A673 (cell line): ENCODE measurements at regions of chr7 and their contacts with region 1.

Region 1: DNA sequence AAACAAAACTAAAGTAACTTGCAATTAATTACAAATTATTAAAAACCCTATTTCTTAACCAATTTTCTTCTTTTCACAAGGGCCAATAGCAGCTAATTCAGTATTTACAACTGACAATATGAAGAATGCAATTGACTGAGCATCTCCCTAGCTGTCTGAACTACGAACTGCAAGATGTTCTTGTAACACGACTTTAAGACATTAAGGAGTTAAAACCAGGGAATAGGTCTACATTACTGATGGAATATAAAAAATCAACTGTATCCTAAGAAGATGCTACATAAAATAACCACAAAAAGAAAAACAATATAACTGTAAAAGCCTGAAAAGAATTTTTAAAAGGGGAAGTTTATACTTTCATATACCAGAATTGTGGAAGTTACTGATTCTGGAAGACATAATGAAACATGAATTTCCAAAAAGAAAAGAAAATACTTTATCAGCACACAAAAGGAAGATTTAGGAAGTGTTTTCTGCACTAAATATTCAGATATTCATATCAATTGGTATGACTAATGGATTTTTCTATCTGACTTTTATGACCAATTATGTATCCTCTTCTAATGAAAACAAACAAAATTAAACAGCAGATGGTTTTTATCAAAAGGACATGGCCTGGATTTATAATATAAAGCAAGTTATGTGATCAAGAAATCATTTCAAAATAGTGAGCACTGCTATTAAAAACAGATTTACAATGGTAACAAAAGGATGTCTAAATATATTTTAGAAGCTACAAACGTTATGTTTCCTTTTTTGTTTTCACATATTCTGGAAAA is 1.6 kb downstream of the GPR22 start:
- DNase-seq: no peak
- H3K4me3 ChIP-seq: no peak overlapping the region
- H3K27ac ChIP-seq: no peak overlapping the region
- H3K4me1 ChIP-seq: no peaks in the 10 kb centered on the region
- H3K27me3 ChIP-seq: no peaks in the 10 kb centered on the region
- CTCF ChIP-seq: no peak

Region 2: DNA sequence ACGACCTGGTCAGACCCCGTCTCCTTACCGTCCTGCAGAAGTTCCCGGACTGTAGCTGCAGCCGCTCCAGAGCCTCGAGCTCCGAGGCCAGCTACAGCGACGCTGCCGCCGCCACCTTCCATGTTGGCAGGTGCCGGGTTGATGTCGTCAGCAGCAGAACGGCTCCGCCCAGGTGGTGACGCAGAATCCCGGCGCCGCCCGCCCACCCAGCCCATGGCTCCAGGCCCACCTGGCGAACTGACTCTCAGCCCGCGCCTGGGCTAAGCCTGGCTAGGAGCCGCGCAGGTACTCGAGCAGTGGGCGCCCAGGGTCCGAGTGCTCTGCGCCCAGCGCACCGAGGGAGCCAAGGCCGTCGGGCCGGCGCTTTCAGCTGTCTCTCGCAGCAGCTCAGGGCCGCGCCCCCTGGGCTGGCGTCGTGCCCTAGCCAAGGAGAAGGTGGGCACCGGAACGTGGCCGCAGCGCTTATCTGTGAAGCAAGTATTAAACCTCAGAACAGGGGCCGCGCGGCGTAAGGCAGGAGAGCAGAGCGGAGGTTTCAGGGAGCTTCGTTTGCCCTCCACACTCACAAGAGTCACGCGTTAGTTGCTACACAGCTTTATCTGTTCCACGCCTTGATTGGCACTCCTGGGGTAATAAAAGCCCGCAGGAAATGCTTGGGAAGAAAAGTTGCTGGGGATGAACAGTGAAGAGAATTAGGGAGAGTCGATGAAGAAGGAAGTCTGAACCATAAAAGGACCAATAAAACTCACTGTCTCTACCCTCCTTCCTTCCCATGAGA is 92.5 kb after region 1 on chr7 and contains the starts of genes COG5 and DUS4L:
- CTCF ChIA-PET with region 1: no interaction called
- POLR2A ChIA-PET with region 1: no interaction called
- intact Hi-C with region 1: loop called (anchors 5 kb)
- DNase-seq: peak; percentile 84
- H3K4me3 ChIP-seq: peak within 1 kb of the TSS; percentile 96
- H3K27ac ChIP-seq: peak within 1 kb of the TSS; percentile 94
- H3K4me1 ChIP-seq: peaks cover 15% of the 10 kb centered on the region
- H3K27me3 ChIP-seq: no peaks in the 10 kb centered on the region
- CTCF ChIP-seq: no peak
- total RNA-seq, gene COG5: 32.2 and 34.1 TPM in 2 replicates
- total RNA-seq, gene DUS4L: 12.6 and 14.4 TPM in 2 replicates

Region 3: DNA sequence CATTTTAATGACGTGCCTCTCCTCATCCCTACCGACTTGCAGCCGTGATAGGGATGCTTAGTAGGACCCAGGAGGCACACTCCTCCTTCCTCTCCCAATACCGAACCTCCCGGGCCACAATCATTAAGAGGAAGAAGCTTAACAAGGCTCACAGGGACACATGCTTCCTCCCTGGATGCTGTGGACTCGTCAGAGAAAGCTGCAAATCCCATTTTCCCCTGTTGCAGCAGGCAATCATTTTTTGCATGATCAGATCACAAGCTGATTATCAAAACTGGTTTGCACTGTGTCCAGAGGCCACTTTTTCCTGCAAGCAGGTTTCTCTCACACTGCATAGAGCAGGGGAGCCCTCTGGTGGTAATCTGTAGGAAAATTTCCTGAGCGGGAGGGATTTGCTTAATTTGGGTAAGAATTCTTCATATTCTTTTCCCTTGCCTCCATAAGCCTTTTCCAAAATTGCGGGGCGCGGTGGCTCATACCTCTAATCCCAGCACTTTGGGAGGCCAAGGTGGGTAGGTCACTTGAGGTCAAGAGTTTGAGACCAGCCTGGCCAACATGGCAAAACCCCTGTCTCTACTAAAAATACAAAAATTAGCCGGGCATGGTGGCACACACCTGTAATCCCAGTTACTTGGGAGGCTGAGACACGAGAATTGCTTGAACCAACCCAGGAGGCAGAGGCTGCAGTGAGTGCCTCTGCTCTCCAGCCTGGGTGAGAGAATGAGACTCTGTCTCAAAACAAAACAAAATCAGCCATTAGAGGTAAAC is 674.8 kb after region 1 on chr7:
- CTCF ChIA-PET with region 1: no interaction called
- POLR2A ChIA-PET with region 1: no interaction called
- intact Hi-C with region 1: no loop called
- DNase-seq: peak; percentile 85
- H3K4me3 ChIP-seq: no peak overlapping the region
- H3K27ac ChIP-seq: no peak overlapping the region
- H3K4me1 ChIP-seq: no peaks in the 10 kb centered on the region
- H3K27me3 ChIP-seq: no peaks in the 10 kb centered on the region
- CTCF ChIP-seq: peak; percentile 86